ENCODE measurements at regions of chr19 and their contacts with region 1.

Region 1: DNA sequence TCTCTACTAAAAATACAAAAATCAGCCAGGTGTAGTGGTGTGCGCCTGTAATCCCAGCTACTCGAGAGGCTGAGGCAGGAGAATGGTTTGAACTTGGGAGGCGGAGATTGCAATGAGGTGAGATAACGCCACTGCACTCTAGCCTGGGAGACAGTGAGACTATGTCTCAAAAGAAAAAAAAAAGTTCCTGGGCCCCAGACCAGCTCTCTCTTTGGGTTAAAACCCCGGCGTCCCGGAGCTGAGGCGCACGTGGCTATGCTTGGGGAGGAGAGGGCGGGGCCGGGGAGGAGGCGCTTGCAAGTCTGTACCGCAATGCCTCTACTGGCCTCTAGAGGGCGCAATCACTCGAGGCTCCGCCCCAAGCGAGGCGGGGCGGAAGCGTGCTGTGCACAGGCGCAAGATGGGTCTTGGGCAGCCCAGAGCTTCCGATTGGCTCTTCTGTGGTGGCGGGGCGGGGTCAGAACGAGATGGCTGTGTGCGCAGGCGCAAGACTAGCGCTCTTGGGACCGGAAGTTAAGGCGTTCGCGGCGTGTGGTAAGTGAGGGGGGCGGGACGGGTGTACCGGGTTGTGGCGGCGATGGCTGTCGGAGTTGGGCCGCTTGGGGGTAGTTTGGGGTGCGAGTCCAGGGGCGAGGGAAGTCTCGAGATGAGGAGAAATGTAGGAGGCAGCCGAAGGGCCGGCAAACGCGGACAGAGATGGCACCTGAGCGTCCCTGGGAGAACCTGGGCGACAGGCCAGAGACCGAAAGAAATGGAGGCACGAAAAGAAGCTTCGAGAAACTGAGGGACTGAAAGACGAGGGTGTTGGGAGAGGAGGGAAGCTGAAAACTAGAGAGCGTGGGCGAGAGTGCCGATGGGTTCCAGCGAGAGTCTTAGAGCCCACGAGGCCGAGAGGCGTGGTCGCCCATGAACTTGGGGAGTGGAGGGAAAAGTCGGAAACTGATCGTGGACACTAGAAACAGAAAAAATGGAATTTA is at the start of gene DHX34:
- DNase-seq: peak; percentile 99
- H3K4me3 ChIP-seq: peak within 1 kb of the TSS; percentile 81
- H3K27ac ChIP-seq: peak within 1 kb of the TSS; percentile 20
- H3K4me1 ChIP-seq: peaks cover 27% of the 10 kb centered on the region
- CTCF ChIP-seq: peak; percentile 95
- total RNA-seq, gene DHX34: 23.0 and 32.2 TPM in 2 replicates

Region 2: GRCh38 chr19:46990991-46991676 is 358.0 kb before region 1 on chr19:
- CTCF ChIA-PET with region 1: no interaction called
- POLR2A ChIA-PET with region 1: no interaction called
- intact Hi-C with region 1: no loop called
- DNase-seq: peak; percentile 68
- H3K4me3 ChIP-seq: no peak overlapping the region
- H3K27ac ChIP-seq: no peak overlapping the region
- H3K4me1 ChIP-seq: peaks cover 14% of the 10 kb centered on the region
- CTCF ChIP-seq: peak; percentile 95

Region 3: DNA sequence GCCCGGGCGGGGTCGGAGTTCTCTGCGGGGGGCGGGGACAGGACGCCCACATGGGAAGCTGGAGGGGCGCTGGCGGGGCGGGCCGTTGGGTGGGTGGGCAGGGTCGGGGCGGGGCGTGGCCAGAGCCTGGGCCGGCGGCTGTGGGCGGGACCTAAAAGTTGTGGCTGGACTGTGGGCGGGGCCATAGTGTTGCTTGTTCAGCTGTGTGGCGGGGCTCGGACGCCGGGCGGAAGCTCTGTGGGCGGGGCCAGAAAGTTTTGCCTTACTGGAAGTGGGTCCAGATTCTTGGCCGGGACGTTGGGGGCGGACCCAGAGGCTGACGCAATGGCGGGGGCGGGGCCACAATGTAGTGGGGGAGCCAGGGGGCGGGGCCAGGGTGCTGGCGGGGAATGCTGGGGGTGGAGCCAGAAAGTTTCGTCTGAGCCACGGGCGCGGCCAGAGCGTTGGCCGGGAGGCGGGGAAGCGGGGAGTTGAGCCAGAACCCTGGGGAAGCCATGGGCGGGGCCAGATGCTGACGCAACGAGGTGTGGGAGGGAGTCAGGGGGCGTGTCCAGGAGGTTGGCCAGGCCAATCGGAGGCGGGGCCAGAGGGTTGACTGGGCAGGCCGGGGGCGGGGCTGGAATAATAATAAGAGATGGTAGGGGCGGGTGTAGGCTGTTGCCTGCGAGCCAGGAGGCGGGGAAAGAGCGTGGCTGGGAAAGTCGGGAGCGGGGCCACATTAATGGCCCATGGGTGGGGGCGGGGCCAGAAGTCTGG is 92.2 kb before region 1 on chr19:
- CTCF ChIA-PET with region 1: no interaction called
- POLR2A ChIA-PET with region 1: no interaction called
- intact Hi-C with region 1: no loop called
- DNase-seq: peak; percentile 100
- H3K4me3 ChIP-seq: peak overlapping the region; percentile 72
- H3K27ac ChIP-seq: peak overlapping the region; percentile 59
- H3K4me1 ChIP-seq: peaks cover 14% of the 10 kb centered on the region
- CTCF ChIP-seq: no peak

Region 4: DNA sequence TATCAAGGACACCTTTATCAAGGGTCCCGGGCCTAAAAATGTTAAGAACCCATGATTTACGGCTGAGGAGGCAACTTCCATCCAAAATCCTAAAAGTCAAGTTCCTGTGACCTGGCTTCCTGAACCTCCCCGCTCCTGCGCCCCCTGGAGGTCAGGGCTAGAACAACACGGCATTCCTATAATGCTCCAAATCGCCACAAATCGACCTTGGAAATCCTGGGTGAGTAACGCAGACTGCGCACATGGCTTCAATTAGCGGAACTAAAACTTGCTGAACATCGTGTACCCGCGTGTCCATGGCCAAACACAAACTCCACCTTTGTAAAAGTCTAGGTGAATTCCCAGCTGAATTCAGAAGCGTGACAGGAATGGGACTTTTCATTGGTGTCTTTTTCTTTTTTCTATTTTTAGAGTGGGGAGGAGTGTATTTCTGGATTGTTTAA is 43.8 kb before region 1 on chr19:
- CTCF ChIA-PET with region 1: no interaction called
- POLR2A ChIA-PET with region 1: no interaction called
- intact Hi-C with region 1: no loop called
- DNase-seq: peak; percentile 59
- H3K4me3 ChIP-seq: no peak overlapping the region
- H3K27ac ChIP-seq: no peak overlapping the region
- H3K4me1 ChIP-seq: no peaks in the 10 kb centered on the region
- CTCF ChIP-seq: peak; percentile 99

Region 5: DNA sequence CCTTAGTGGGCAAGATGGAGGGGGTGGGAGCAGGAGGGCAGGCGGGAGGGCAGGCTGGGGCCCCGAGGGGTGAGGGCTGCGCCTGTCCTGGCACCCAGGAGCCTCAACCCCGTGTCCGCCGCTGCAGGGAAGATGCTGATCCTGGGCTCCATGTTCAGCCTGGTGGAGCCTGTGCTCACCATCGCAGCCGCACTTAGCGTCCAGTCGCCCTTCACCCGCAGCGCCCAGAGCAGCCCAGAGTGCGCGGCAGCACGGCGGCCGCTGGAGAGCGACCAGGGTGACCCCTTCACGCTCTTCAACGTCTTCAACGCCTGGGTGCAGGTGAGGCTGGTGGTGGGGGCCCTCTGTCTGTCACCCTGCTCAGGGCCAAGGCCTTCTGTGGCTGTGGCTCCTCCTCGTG is 23.5 kb after region 1 on chr19:
- CTCF ChIA-PET with region 1: interaction called, 21 read pairs
- POLR2A ChIA-PET with region 1: no interaction called
- intact Hi-C with region 1: no loop called
- DNase-seq: no peak
- H3K4me3 ChIP-seq: no peak overlapping the region
- H3K27ac ChIP-seq: no peak overlapping the region
- H3K4me1 ChIP-seq: no peaks in the 10 kb centered on the region
- CTCF ChIP-seq: no peak

Region 6: DNA sequence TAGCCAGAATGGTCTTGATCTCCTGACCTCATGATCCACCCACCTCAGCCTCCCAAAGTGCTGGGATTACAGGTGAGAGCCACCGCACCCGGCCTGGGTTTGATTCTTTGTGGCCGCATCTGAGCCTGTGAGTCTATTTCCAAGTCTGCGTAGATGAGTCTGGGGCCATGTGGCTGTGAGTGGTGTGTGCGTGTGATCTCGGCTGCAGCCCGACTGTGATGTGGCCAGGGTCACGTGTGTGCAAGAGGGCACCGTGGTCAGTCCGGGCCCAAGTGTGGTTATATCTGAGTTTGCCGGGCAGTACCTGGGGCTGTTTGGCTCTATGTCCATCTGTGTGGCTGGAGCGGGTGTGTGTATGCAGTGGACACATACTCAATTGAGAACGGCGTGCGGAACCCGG is 64.8 kb after region 1 on chr19:
- CTCF ChIA-PET with region 1: no interaction called
- POLR2A ChIA-PET with region 1: no interaction called
- intact Hi-C with region 1: no loop called
- DNase-seq: no peak
- H3K4me3 ChIP-seq: no peak overlapping the region
- H3K27ac ChIP-seq: no peak overlapping the region
- H3K4me1 ChIP-seq: no peaks in the 10 kb centered on the region
- CTCF ChIP-seq: no peak